ENCODE measurements at regions of chr1 and their contacts with region 1.

Region 1: GRCh38 chr1:113072757-113073478 is at the start of gene LRIG2:
- DNase-seq: peak; percentile 97
- H3K4me3 Mint-ChIP-seq: peak within 1 kb of the TSS; percentile 98
- H3K27ac Mint-ChIP-seq: peak within 1 kb of the TSS; percentile 86
- H3K4me1 Mint-ChIP-seq: peaks cover 25% of the 10 kb centered on the region
- H3K27me3 Mint-ChIP-seq: no peaks in the 10 kb centered on the region
- total RNA-seq, gene LRIG2: 11.2 and 12.3 TPM in 2 replicates

Region 2: DNA sequence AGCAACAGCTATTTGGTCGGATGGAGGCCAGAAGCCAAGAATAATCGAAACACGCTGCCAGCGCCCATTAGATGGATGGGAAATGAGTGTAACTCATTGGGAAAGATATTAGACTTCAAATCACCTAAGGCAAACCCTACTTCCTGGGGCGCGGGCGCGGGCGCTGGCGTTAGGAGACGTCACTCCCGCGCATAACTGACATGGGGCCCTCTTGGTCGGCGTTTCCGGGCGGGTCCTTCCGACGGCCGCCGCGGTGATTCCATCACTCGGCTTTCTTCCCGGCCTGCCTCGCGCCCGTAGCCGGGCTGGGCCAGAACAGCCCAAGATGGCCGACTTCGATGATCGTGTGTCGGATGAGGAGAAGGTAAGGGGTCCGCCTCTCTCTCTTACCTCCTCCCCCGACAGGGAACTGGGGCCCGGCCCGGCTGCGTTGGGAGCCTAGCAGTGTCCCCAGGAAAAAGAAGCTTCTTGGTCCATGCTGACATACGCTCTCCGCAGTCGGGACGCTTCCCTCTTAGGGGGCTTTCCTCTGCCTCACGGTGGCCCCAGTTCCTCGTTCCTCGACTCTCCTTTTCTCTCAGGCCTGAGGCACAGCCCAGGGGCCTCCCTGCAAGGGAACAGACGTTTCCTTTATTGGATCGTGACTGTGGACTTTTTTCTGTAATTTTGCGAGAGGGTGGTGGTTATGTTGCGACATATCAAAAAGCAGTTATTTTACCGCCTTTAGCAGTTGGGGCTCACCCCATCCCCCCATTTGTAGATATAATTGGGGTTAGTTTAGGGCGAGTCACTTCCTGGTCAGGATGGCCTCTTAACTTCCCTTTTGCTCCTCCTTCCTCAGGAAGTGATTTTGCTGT is 453.2 kb before region 1 on chr1 and contains the start of gene CAPZA1:
- intact Hi-C with region 1: loop called (anchors 2 kb)
- DNase-seq: peak; percentile 90
- H3K4me3 Mint-ChIP-seq: peak within 1 kb of the TSS; percentile 98
- H3K27ac Mint-ChIP-seq: peak within 1 kb of the TSS; percentile 98
- H3K4me1 Mint-ChIP-seq: peaks cover 48% of the 10 kb centered on the region
- H3K27me3 Mint-ChIP-seq: no peaks in the 10 kb centered on the region
- total RNA-seq, gene CAPZA1: 239 and 242 TPM in 2 replicates

Region 3: GRCh38 chr1:112881742-112882127 is 191.2 kb before region 1 on chr1:
- intact Hi-C with region 1: loop called (anchors 2 kb)
- DNase-seq: no peak
- H3K4me3 Mint-ChIP-seq: no peak overlapping the region
- H3K27ac Mint-ChIP-seq: no peak overlapping the region
- H3K4me1 Mint-ChIP-seq: no peaks in the 10 kb centered on the region
- H3K27me3 Mint-ChIP-seq: peaks cover 18% of the 10 kb centered on the region

Region 4: DNA sequence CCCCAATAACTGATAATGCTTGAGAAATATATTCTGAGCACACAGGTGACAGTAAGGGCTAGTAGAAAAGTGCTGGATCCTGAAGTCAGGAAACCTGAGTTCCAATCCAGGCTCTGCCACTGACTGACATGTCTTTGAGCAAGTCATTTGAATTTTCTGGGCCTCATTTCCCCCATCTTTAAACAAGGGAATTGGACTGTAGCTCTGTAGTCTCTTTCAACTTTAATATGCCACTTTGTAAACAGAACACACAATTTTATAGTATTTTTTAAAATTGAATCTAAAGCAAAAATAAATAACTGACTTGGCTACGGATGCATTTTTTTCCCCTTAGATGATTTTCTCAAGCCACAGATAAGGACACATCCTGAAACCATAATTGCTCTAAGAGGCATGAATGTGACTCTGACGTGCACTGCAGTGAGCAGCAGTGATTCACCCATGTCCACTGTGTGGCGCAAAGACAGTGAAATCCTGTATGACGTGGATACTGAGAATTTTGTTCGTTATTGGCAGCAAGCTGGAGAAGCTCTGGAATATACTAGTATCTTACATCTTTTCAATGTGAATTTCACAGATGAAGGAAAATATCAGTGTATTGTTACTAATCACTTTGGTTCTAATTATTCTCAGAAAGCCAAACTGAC is 37.1 kb after region 1 on chr1:
- intact Hi-C with region 1: no loop called
- DNase-seq: no peak
- H3K4me3 Mint-ChIP-seq: no peak overlapping the region
- H3K27ac Mint-ChIP-seq: no peak overlapping the region
- H3K4me1 Mint-ChIP-seq: no peaks in the 10 kb centered on the region
- H3K27me3 Mint-ChIP-seq: no peaks in the 10 kb centered on the region

Region 5: DNA sequence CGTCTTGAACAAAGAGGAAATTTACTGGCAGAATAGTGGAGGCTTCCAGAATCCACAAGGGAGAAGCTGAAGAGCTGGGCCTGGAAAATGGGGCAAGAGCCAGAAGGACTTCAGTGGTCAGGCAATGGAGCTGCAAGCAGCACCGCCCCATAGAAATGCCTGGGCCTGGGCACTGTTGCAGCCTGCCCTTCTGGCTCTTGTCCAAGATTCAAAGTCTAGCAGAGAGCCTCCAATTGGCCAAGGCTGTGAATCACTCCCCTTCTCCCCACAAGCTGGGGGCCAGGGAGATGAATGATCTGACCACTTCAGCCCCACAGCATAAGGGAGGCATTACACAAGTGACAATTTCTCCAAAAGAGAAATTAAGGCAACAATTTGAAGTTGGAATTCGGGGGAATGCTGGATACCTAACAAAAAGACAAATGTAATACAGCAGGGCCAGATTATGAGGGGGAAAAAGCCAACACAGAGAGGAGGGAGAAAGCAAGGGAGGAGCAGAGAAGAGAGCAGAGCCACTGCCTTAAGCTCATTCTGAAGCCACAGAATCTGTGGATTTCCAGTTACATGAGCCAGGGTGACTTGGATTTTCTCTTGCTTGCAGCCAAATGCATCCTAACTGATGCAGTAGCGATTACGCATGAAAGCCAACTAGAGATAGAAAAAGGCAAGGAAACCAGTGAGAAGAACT is 80.3 kb after region 1 on chr1:
- intact Hi-C with region 1: no loop called
- DNase-seq: no peak
- H3K4me3 Mint-ChIP-seq: no peak overlapping the region
- H3K27ac Mint-ChIP-seq: no peak overlapping the region
- H3K4me1 Mint-ChIP-seq: no peaks in the 10 kb centered on the region
- H3K27me3 Mint-ChIP-seq: peaks cover 12% of the 10 kb centered on the region

Region 6: GRCh38 chr1:113389953-113390834 is 317.3 kb after region 1 on chr1 and contains the start of gene MAGI3:
- intact Hi-C with region 1: loop called (anchors 2 kb)
- DNase-seq: peak; percentile 95
- H3K4me3 Mint-ChIP-seq: peak within 1 kb of the TSS; percentile 88
- H3K27ac Mint-ChIP-seq: peak within 1 kb of the TSS; percentile 79
- H3K4me1 Mint-ChIP-seq: peaks cover 30% of the 10 kb centered on the region
- H3K27me3 Mint-ChIP-seq: peaks cover 33% of the 10 kb centered on the region
- total RNA-seq, gene MAGI3: 3.0 and 3.2 TPM in 2 replicates

Region 7: DNA sequence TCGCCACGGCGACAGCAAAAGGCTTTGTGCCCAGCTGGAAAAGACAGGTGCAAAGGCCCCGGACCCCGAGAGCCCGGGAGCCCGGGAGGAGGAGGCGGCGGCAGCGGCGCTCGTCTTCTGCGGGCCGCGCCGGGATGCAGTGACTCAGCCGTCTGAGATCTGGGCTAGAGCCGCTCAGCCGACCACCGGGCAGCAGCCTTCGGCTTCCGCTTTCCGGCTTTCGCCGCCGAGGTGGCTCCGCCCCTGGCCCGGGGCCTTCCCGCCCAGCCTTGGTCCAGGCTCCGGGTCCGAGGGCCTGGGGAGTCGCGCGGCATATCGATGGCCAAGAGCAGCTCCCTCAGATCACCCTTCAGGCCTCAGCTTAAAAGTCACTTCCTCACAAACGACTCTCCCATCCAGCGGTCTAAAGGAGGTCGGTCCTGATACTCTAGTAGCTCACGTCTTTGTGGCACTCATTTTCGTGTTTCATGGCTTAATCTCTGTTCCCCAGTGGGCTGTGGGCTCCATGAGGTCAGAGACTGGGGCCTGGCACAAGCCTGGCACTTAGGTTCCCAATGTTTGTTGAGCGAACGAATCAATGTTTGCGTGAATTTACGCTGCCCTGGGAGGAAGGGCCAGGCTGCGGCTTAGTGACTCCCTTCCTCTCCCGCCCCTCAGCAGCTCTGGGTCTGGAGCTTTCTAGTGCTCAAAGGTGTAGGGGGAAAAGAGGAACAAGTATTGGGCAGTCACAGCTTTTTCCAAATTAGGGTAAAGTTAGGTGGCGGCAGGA is 686.6 kb after region 1 on chr1 and contains the start of gene PHTF1:
- intact Hi-C with region 1: loop called (anchors 2 kb)
- DNase-seq: peak; percentile 53
- H3K4me3 Mint-ChIP-seq: peak within 1 kb of the TSS; percentile 95
- H3K27ac Mint-ChIP-seq: peak within 1 kb of the TSS; percentile 97
- H3K4me1 Mint-ChIP-seq: peaks cover 37% of the 10 kb centered on the region
- H3K27me3 Mint-ChIP-seq: no peaks in the 10 kb centered on the region
- total RNA-seq, gene PHTF1: 14.7 and 16.6 TPM in 2 replicates

Region 8: DNA sequence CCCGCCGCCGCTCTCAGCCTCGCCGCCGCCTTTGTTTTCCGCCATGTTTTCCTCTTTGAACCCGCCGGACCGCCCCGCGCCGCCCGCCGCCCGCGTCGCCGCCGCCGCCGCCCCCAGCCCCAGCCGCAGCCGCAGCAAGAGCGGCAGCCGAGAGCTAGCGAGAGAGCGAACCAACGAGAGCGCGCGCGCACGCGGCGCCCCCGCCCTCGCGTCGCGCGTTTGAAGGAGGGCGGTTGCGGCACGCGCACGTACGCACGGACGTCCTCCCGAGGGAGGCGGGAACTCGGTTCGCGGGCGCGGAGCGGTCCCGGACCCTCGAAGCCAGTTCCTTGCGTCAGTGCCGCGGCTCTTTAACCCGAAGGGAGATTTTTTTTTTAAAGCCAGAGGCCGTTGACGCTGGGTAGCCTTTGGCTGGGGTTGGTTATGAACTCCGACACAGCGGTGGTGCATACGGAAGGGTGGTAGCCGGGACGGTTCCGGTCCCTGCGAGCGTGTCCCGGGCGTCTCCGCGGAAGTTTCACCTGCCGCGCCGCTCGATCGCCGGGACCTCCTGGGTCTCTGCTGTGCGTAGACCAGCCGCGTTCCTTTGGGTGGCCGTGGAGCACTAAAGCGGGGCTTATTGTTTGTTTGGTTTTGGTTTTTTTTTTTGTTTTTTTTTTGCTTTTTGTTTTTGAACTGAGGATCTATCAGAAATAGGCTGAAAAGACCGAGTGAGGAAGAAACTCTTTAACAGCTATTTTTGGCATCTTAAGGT is 1438.3 kb after region 1 on chr1 and contains the start of gene TRIM33:
- intact Hi-C with region 1: loop called (anchors 10 kb)
- DNase-seq: peak; percentile 92
- H3K4me3 Mint-ChIP-seq: peak within 1 kb of the TSS; percentile 93
- H3K27ac Mint-ChIP-seq: peak within 1 kb of the TSS; percentile 98
- H3K4me1 Mint-ChIP-seq: peaks cover 45% of the 10 kb centered on the region
- H3K27me3 Mint-ChIP-seq: peaks cover 1% of the 10 kb centered on the region
- total RNA-seq, gene TRIM33: 39.2 and 41.7 TPM in 2 replicates

Measured in activated T-helper 1 cell treated with anti-CD3 and anti-CD28 coated beads, Interleukin-12 subunit alpha, Interleukin-12 subunit beta, Interleukin-2, Interleukin-4 antibody, amounts not matched to agents 30 ng/mL and 10 ng/mL and 1 ng/mL, durations not matched to agents 14 hours and 24 hours and 36 hours (primary cell).